K562 (cell line): ENCODE measurements at regions of chr6 and their contacts with region 1.

Region 1: GRCh38 chr6:16956361-16956760 is 145.5 kb upstream of the STMND1 start:
- DNase-seq: no peak
- ATAC-seq: no peak
- H3K4me3 ChIP-seq: no peak overlapping the region
- H3K27ac ChIP-seq: no peak overlapping the region
- H3K4me1 ChIP-seq: no peaks in the 10 kb centered on the region
- H3K27me3 ChIP-seq: no peaks in the 10 kb centered on the region
- CTCF ChIP-seq: no peak
- EP300 ChIP-seq: no peak
- POLR2A ChIP-seq: no peak
- RAD21 ChIP-seq: no peak; a peak in 1 of 4 replicates

Region 2: DNA sequence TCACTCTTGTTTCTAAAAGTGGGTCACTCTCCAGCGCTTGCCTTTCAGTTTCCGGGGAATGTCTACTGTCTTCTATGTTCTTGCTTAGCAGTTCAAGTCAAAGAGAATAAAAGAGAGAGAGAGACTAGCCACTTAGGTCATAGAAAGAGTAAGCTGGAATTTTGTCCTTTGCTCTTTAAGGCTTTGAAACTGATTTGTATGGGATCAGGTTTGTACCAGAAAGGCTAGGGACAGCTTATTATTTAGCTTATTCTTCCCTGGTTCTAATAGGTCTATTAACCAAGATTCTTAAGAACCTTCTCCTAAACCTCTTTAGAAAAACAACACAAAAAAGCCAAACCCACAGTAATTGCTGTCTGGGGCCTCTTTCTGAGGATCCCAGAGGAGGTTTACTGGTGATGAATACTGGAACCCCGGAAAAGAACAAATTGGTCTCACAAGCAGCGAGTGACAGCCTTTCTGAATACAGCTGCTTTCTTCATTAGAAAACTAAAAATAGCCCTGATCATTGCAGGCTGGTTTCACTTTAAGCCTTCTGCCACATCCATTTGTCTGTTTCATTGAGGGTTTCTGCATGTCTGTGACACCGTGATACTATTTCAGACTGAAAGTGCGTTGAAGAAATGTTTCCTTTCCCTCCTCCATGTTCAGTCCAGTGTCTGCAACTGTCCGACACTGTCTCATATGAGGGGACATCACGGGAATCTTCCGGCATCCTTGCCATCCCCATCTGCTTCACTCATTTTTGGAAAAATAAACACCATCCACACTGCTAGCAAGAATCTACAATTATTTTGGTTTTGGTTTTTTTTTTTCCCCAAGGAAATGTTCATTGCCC is 120.0 kb before region 1 on chr6:
- CTCF ChIA-PET with region 1: no interaction called
- POLR2A ChIA-PET with region 1: no interaction called
- in situ Hi-C with region 1: no loop called
- intact Hi-C with region 1: loop called (anchors 10 kb)
- DNase-seq: no peak
- ATAC-seq: no peak
- H3K4me3 ChIP-seq: no peak overlapping the region
- H3K27ac ChIP-seq: no peak overlapping the region
- H3K4me1 ChIP-seq: peaks cover 0 to 2% of the 10 kb centered on the region in 2 experiments; a peak in 1 of 5 replicates
- H3K27me3 ChIP-seq: peaks cover 21 to 36% of the 10 kb centered on the region in 2 experiments
- CTCF ChIP-seq: no peak
- EP300 ChIP-seq: no peak
- POLR2A ChIP-seq: no peak
- RAD21 ChIP-seq: no peak

Region 3: GRCh38 chr6:16872543-16873235 is 83.7 kb before region 1 on chr6:
- CTCF ChIA-PET with region 1: no interaction called
- POLR2A ChIA-PET with region 1: no interaction called
- in situ Hi-C with region 1: no loop called
- intact Hi-C with region 1: no loop called
- DNase-seq: no peak
- ATAC-seq: peak; percentile 42; the same call in 2 of the 3 replicates
- H3K4me3 ChIP-seq: no peak overlapping the region
- H3K27ac ChIP-seq: no peak overlapping the region
- H3K4me1 ChIP-seq: no peaks in the 10 kb centered on the region; a peak in 2 of 5 replicates
- H3K27me3 ChIP-seq: peaks cover 0 to 2% of the 10 kb centered on the region in 2 experiments; a peak in 2 of 5 replicates
- CTCF ChIP-seq: peak in 2 of 3 experiments; percentile 14 to 25; a peak in 2 of 6 replicates
- EP300 ChIP-seq: no peak
- POLR2A ChIP-seq: no peak
- RAD21 ChIP-seq: peak; percentile 19 to 44; a peak in 2 of 4 replicates

Region 4: DNA sequence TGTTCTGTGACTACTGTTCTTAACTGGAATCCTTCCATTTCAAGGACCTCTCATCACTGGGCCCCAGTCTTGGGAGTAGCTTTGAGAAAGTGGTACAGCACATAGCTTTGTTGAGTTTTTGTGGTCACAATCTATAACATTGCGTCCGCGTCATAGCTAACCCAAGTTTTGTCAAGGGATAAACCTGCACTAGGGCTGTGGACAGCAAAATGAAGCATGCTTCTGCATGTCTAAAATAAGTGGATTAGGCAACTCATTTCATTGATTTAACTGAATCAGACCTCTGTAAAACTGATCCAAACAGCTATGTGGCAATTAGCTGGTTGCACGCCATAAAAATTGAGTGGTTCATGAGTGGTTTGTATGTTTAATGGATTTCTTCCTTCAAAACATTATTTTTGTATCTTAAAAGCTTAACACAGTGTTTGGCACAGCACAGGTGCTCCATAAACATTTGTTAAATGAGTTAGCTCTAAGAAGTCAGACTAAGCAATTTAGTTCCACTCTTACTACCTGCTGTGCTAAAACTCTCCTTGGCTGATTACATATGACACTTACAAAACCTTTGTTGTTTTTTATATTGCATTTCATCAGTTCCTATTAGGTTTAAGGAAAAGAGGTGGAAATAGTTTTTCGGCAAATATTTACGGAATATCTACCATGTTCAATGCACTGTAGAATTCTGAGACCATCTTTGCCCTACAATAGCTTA is 34.8 kb before region 1 on chr6:
- CTCF ChIA-PET with region 1: no interaction called
- POLR2A ChIA-PET with region 1: no interaction called
- in situ Hi-C with region 1: no loop called
- intact Hi-C with region 1: no loop called
- DNase-seq: no peak
- ATAC-seq: no peak
- H3K4me3 ChIP-seq: no peak overlapping the region
- H3K27ac ChIP-seq: no peak overlapping the region
- H3K4me1 ChIP-seq: no peaks in the 10 kb centered on the region
- H3K27me3 ChIP-seq: no peaks in the 10 kb centered on the region; a peak in 2 of 5 replicates
- CTCF ChIP-seq: no peak
- EP300 ChIP-seq: no peak
- POLR2A ChIP-seq: no peak
- RAD21 ChIP-seq: no peak

Region 5: GRCh38 chr6:16972535-16972934 is 16.2 kb after region 1 on chr6:
- CTCF ChIA-PET with region 1: no interaction called
- POLR2A ChIA-PET with region 1: no interaction called
- in situ Hi-C with region 1: no loop called
- intact Hi-C with region 1: no loop called
- DNase-seq: no peak
- ATAC-seq: no peak
- H3K4me3 ChIP-seq: no peak overlapping the region
- H3K27ac ChIP-seq: no peak overlapping the region
- H3K4me1 ChIP-seq: no peaks in the 10 kb centered on the region
- H3K27me3 ChIP-seq: peaks cover 4 to 17% of the 10 kb centered on the region in 2 experiments
- CTCF ChIP-seq: no peak
- EP300 ChIP-seq: no peak
- POLR2A ChIP-seq: no peak
- RAD21 ChIP-seq: no peak